Endothelial cell of umbilical vein (primary cell): ENCODE measurements at regions of chr7 and their contacts with region 1.

Region 1: DNA sequence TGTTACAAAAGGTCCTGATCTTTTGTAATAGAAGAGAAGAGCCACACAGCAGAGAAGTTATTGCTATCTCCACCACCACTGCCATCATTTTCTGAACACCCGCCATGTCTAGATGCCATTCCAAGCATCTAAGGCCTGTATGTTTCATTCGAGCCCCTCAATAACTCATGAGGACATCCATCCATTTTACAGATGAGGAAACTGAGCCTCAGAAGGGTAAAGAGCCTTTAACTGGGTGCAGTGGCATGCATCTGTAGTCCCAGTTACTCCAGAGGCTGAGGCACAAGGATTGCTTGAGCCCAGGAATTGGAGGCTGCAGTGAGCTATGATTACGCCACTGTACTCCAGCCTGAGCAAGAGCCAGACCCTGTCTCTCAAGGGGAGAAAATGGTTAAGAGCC is 39.3 kb downstream of the UBE2H start:
- DNase-seq: no peak
- H3K4me3 ChIP-seq: no peak overlapping the region
- H3K27ac ChIP-seq: no peak overlapping the region
- H3K4me1 ChIP-seq: peaks cover 16% of the 10 kb centered on the region
- H3K27me3 ChIP-seq: no peaks in the 10 kb centered on the region
- CTCF ChIP-seq: no peak
- POLR2A ChIP-seq: no peak

Region 2: GRCh38 chr7:129940329-129940728 is 26.9 kb after region 1 on chr7:
- CTCF ChIA-PET with region 1: no interaction called
- POLR2A ChIA-PET with region 1: interaction called, 15 read pairs
- dilution Hi-C with region 1: no loop called
- intact Hi-C with region 1: no loop called
- DNase-seq: no peak
- H3K4me3 ChIP-seq: no peak overlapping the region
- H3K27ac ChIP-seq: no peak overlapping the region
- H3K4me1 ChIP-seq: no peaks in the 10 kb centered on the region
- H3K27me3 ChIP-seq: no peaks in the 10 kb centered on the region
- CTCF ChIP-seq: no peak
- POLR2A ChIP-seq: no peak